Posterior cingulate gyrus (tissue), 11 donors: ENCODE measurements at regions of chr5 and their contacts with region 1.

Region 1: GRCh38 chr5:4879693-4880303 is 260.3 kb upstream of the ADAMTS16 start:
- DNase-seq: peak; percentile 68 to 97 (median 87)

Region 2: GRCh38 chr5:4941957-4942830 is 62.4 kb after region 1 on chr5:
- intact Hi-C with region 1: loop called (anchors 5 kb)
- DNase-seq: peak in 3 of 10 donors; percentile 40 to 74 (median 42)

Region 3: GRCh38 chr5:5421961-5422818 is 542.4 kb after region 1 on chr5 and contains the start of gene ICE1:
- intact Hi-C with region 1: loop called (anchors 1 kb)
- DNase-seq: peak; percentile 96 to 100 (median 98)